ENCODE measurements at regions of chr12 and their contacts with region 1.

Region 1: GRCh38 chr12:6965026-6965661 is 5.3 kb downstream of the PHB2 start:
- DNase-seq: peak; percentile 82
- H3K4me3 ChIP-seq: peak overlapping the region; percentile 74 to 97 (median 94)
- H3K27ac ChIP-seq: peak overlapping the region; percentile 88
- H3K4me1 ChIP-seq: peaks cover 55% of the 10 kb centered on the region
- H3K27me3 ChIP-seq: no peaks in the 10 kb centered on the region
- CTCF ChIP-seq: peak; percentile 93 to 95

Region 2: GRCh38 chr12:6890789-6891645 is 74.1 kb before region 1 on chr12:
- CTCF ChIA-PET with region 1: no interaction called
- dilution Hi-C with region 1: loop called (anchors 5 kb)
- in situ Hi-C with region 1: no loop called
- intact Hi-C with region 1: no loop called
- DNase-seq: peak; percentile 94
- H3K4me3 ChIP-seq: peak overlapping the region; percentile 30 to 57 (median 35)
- H3K27ac ChIP-seq: peak overlapping the region; percentile 76
- H3K4me1 ChIP-seq: peaks cover 12% of the 10 kb centered on the region
- H3K27me3 ChIP-seq: no peaks in the 10 kb centered on the region
- CTCF ChIP-seq: peak; percentile 56 to 66

Region 3: DNA sequence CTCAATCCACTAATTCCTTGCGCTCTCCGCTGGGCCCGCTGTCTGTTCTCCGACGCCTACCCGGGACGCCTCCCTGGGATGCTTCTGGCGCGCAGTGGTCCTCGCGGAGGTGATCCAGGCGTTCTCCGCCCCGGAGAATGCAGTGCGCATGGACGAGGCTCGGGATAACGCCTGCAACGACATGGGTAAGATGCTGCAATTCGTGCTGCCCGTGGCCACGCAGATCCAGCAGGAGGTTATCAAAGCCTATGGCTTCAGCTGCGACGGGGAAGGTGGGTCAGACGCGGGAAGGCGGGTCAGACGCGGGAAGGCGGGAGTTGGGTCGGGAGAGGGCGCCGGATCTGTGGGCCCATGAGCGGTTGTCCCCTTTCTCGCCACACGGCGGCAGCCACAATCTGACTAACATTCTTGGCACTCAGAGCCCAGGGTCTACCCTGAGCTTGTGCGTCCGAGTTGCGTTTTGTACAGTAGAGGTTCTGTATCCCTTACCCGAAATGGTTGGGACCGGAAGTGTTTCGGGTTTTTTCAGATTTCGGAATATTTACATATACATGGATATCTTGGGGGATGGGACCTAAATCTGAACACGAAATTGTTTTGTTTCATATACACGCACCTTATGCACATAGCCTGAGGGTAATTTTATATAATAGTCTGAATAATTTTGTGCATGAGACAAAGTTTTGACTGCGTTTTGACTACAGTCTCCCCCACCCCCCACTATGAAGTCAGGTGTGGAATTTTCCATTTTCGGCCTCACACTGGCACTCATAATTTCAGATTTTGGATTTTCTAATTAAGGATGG is 20.6 kb before region 1 on chr12:
- CTCF ChIA-PET with region 1: interaction called, 4 read pairs
- dilution Hi-C with region 1: no loop called
- in situ Hi-C with region 1: no loop called
- intact Hi-C with region 1: loop called (anchors 1 kb)
- DNase-seq: no peak
- H3K4me3 ChIP-seq: peak overlapping the region; percentile 36 to 64 (median 47)
- H3K27ac ChIP-seq: peak overlapping the region; percentile 94
- H3K4me1 ChIP-seq: peaks cover 29% of the 10 kb centered on the region
- H3K27me3 ChIP-seq: no peaks in the 10 kb centered on the region
- CTCF ChIP-seq: peak; percentile 55 to 77

Region 4: GRCh38 chr12:7018350-7019042 is 53.4 kb after region 1 on chr12 and contains the start of gene LPCAT3:
- CTCF ChIA-PET with region 1: no interaction called
- dilution Hi-C with region 1: loop called (anchors 5 kb)
- in situ Hi-C with region 1: no loop called
- intact Hi-C with region 1: loop called (anchors 1 kb)
- DNase-seq: peak; percentile 96
- H3K4me3 ChIP-seq: peak within 1 kb of the TSS; percentile 81 to 95 (median 84)
- H3K27ac ChIP-seq: peak within 1 kb of the TSS; percentile 38
- H3K4me1 ChIP-seq: peaks cover 20% of the 10 kb centered on the region
- H3K27me3 ChIP-seq: no peaks in the 10 kb centered on the region
- CTCF ChIP-seq: peak; percentile 55 to 91
- total RNA-seq, gene LPCAT3: 22.8 to 31.3 TPM

Region 5: GRCh38 chr12:7035463-7035862 is 70.3 kb after region 1 on chr12:
- CTCF ChIA-PET with region 1: no interaction called
- dilution Hi-C with region 1: no loop called
- in situ Hi-C with region 1: no loop called
- intact Hi-C with region 1: no loop called
- DNase-seq: no peak
- H3K4me3 ChIP-seq: no peak overlapping the region
- H3K27ac ChIP-seq: no peak overlapping the region
- H3K4me1 ChIP-seq: peaks cover 20% of the 10 kb centered on the region
- H3K27me3 ChIP-seq: no peaks in the 10 kb centered on the region
- CTCF ChIP-seq: no peak

Region 6: GRCh38 chr12:7092229-7092985 is 127.3 kb after region 1 on chr12 and contains the start of gene C1R:
- CTCF ChIA-PET with region 1: no interaction called
- dilution Hi-C with region 1: loop called (anchors 5 kb)
- in situ Hi-C with region 1: no loop called
- intact Hi-C with region 1: loop called (anchors 5 kb)
- DNase-seq: peak; percentile 48
- H3K4me3 ChIP-seq: peak within 1 kb of the TSS; percentile 27 to 46 (median 45)
- H3K27ac ChIP-seq: no peak within 1 kb of the TSS
- H3K4me1 ChIP-seq: peaks cover 9% of the 10 kb centered on the region
- H3K27me3 ChIP-seq: no peaks in the 10 kb centered on the region
- CTCF ChIP-seq: peak; percentile 84 to 87
- total RNA-seq, gene C1R: 6.1 to 16.3 TPM